CD14-positive monocyte (primary cell): ENCODE measurements at regions of chr20 and their contacts with region 1.

Region 1: DNA sequence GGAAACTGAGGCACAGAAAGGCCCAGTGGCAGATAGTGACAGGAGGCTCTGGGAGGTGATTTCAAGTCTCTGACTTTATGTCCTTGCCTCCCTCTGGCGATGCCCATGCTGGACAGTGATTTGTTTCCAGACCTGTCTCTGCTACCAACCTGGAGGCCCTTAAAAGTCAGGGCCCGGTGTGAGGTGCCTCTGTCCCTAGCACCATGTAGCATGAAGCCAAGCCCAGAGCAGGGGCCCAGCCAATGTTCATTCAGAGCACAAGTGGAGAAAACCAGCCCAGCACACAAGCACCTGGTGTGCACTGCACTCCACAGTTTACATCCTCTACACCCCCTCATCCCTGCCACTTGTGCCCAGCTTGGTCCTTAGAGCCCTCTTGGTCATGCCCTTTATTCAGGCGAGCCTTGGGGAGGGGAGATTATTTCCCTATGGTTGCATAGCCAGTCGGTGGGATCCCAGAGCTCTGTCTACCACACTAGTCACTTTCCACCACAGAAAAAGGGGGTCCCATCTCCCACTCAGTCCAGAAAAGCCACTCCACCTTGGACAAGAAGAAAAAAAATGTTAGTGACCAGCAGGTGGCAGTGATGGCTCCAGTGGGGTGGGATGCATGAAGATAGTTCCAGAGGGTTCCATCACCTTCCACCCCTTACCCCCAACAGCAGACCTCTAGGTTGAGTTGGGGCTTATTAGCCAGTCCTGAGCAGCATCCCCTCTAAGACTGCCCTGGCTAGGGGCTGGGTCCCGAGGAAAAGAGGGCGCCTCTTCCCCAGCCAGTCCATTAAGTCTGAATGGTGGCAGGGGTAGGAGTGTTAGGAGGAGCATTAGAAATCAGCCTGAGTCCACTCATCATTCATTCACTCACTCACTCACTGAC is 30.9 kb downstream of the KIAA1755 start:
- DNase-seq: peak in 2 of 3 donors; percentile 41 to 46
- H3K4me3 ChIP-seq: no peak overlapping the region
- H3K4me3 Mint-ChIP-seq: no peak overlapping the region
- H3K27ac ChIP-seq: no peak overlapping the region
- H3K27ac Mint-ChIP-seq: no peak overlapping the region
- H3K4me1 ChIP-seq: peaks cover 15 to 16% of the 10 kb centered on the region in 2 donors
- H3K4me1 Mint-ChIP-seq: peaks cover 17% of the 10 kb centered on the region
- H3K27me3 ChIP-seq: peaks cover 2 to 3% of the 10 kb centered on the region in 2 donors
- H3K27me3 Mint-ChIP-seq: peaks cover 5 to 20% (median 12%) of the 10 kb centered on the region in 3 donors
- CTCF ChIP-seq: peak; percentile 84

Region 2: GRCh38 chr20:38304845-38305447 is 75.3 kb after region 1 on chr20:
- intact Hi-C with region 1: loop called in 1 of 2 experiments (anchors 5 kb)
- DNase-seq: peak; percentile 66 to 77 (median 69)
- H3K4me3 ChIP-seq: peak overlapping the region in 1 of 3 experiments; percentile 65
- H3K4me3 Mint-ChIP-seq: peak overlapping the region; percentile 64 to 81
- H3K27ac ChIP-seq: peak overlapping the region; percentile 53 to 76
- H3K27ac Mint-ChIP-seq: peak overlapping the region; percentile 63 to 94 (median 86)
- H3K4me1 ChIP-seq: peaks cover 75 to 79% of the 10 kb centered on the region in 2 donors
- H3K4me1 Mint-ChIP-seq: peaks cover 81% of the 10 kb centered on the region
- H3K27me3 ChIP-seq: peaks cover 2 to 6% of the 10 kb centered on the region in 2 donors
- H3K27me3 Mint-ChIP-seq: peaks cover 7 to 20% (median 14%) of the 10 kb centered on the region in 3 donors
- CTCF ChIP-seq: peak; percentile 88

Region 3: GRCh38 chr20:38321959-38322598 is 92.5 kb after region 1 on chr20:
- intact Hi-C with region 1: loop called (anchors 1 to 5 kb)
- DNase-seq: peak; percentile 21 to 50 (median 49)
- H3K4me3 ChIP-seq: no peak overlapping the region
- H3K4me3 Mint-ChIP-seq: no peak overlapping the region
- H3K27ac ChIP-seq: no peak overlapping the region
- H3K27ac Mint-ChIP-seq: no peak overlapping the region
- H3K4me1 ChIP-seq: no peaks in the 10 kb centered on the region
- H3K4me1 Mint-ChIP-seq: peaks cover 10% of the 10 kb centered on the region
- H3K27me3 ChIP-seq: peaks cover 0 to 3% of the 10 kb centered on the region in 2 donors
- H3K27me3 Mint-ChIP-seq: peaks cover 9 to 32% (median 16%) of the 10 kb centered on the region in 3 donors
- CTCF ChIP-seq: peak; percentile 76

Region 4: GRCh38 chr20:38406476-38406875 is 176.9 kb after region 1 on chr20:
- intact Hi-C with region 1: loop called (anchors 5 to 10 kb)
- DNase-seq: no peak
- H3K4me3 ChIP-seq: no peak overlapping the region
- H3K4me3 Mint-ChIP-seq: no peak overlapping the region
- H3K27ac ChIP-seq: no peak overlapping the region
- H3K27ac Mint-ChIP-seq: no peak overlapping the region
- H3K4me1 ChIP-seq: no peaks in the 10 kb centered on the region
- H3K4me1 Mint-ChIP-seq: no peaks in the 10 kb centered on the region
- H3K27me3 ChIP-seq: no peaks in the 10 kb centered on the region
- H3K27me3 Mint-ChIP-seq: peaks cover 1 to 6% (median 4%) of the 10 kb centered on the region in 3 donors
- CTCF ChIP-seq: no peak

Region 5: DNA sequence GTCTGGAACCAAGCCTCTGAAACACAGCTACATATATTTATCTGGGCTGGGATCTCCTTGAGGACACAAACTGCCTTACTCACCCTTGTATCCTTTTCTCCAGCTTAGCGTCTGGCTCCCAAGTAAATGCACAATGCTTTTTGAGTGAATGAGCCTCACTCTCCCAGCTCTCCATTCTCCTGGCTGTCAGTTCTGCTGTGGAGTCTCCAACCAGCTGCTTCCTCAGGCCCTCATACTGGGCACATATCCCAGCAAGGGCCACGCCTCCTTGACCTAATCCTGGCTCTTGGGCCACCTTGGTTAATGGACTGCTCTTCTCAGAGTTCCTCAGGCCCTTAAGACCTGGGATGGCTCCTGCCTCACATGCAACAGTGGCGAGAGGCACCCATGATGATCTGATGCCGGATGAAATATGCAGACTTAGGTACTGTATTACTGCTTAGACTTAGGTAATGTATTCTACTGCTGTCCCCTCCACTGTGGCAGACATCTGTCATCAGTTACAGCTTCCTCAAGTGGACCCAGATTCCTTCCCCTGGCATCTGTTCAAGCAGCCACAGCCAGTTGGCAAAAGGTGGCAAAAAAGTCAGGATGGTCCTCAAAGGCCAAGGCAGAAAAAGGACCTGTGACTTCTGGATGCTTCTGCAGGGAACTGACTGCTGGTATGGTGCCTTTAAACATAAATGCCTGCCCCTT is 189.0 kb after region 1 on chr20:
- intact Hi-C with region 1: loop called in 1 of 2 experiments (anchors 10 kb)
- DNase-seq: no peak
- H3K4me3 ChIP-seq: no peak overlapping the region
- H3K4me3 Mint-ChIP-seq: no peak overlapping the region
- H3K27ac ChIP-seq: no peak overlapping the region
- H3K27ac Mint-ChIP-seq: peak overlapping the region in 2 of 7 donors; percentile 33 to 60
- H3K4me1 ChIP-seq: no peaks in the 10 kb centered on the region
- H3K4me1 Mint-ChIP-seq: no peaks in the 10 kb centered on the region
- H3K27me3 ChIP-seq: no peaks in the 10 kb centered on the region
- H3K27me3 Mint-ChIP-seq: peaks cover 0 to 5% (median 0%) of the 10 kb centered on the region in 3 donors
- CTCF ChIP-seq: no peak